ENCODE measurements at regions of chr9 and their contacts with region 1.

Region 1: GRCh38 chr9:100426530-100427428 is at the start of gene MSANTD3:
- DNase-seq: peak; percentile 76
- ATAC-seq: peak; percentile 64
- H3K4me3 ChIP-seq: peak within 1 kb of the TSS; percentile 66
- H3K27ac ChIP-seq: peak within 1 kb of the TSS; percentile 95
- H3K4me1 ChIP-seq: peaks cover 17% of the 10 kb centered on the region
- H3K27me3 ChIP-seq: no peaks in the 10 kb centered on the region
- CTCF ChIP-seq: peak; percentile 31
- POLR2A ChIP-seq: peak; percentile 90
- RAD21 ChIP-seq: no peak; the same call in 1 of the 2 replicates
- total RNA-seq, gene MSANTD3: 55.9 and 71.1 TPM in 2 replicates

Region 2: GRCh38 chr9:100346836-100347235 is 79.9 kb before region 1 on chr9:
- CTCF ChIA-PET with region 1: no interaction called
- POLR2A ChIA-PET with region 1: no interaction called
- dilution Hi-C with region 1: no loop called
- in situ Hi-C with region 1: loop called (anchors 5 kb)
- intact Hi-C with region 1: loop called (anchors 1 kb)
- DNase-seq: peak; percentile 53
- ATAC-seq: peak; percentile 77
- H3K4me3 ChIP-seq: no peak overlapping the region
- H3K27ac ChIP-seq: peak overlapping the region; percentile 1; the same call in 1 of the 2 replicates
- H3K4me1 ChIP-seq: peaks cover 2% of the 10 kb centered on the region; the same call in 1 of the 2 replicates
- H3K27me3 ChIP-seq: no peaks in the 10 kb centered on the region
- CTCF ChIP-seq: no peak
- POLR2A ChIP-seq: no peak
- RAD21 ChIP-seq: no peak

Region 3: GRCh38 chr9:100352727-100353505 is 73.9 kb before region 1 on chr9 and contains the start of gene TEX10:
- CTCF ChIA-PET with region 1: interaction called, 3 read pairs
- POLR2A ChIA-PET with region 1: interaction called, 6 read pairs
- dilution Hi-C with region 1: no loop called
- in situ Hi-C with region 1: loop called (anchors 5 kb)
- intact Hi-C with region 1: loop called (anchors 1 kb)
- DNase-seq: peak; percentile 81
- ATAC-seq: peak; percentile 95
- H3K4me3 ChIP-seq: peak within 1 kb of the TSS; percentile 96
- H3K27ac ChIP-seq: peak within 1 kb of the TSS; percentile 87
- H3K4me1 ChIP-seq: no peaks in the 10 kb centered on the region; the same call in 1 of the 2 replicates
- H3K27me3 ChIP-seq: no peaks in the 10 kb centered on the region
- CTCF ChIP-seq: no peak
- POLR2A ChIP-seq: peak; percentile 87
- RAD21 ChIP-seq: no peak
- total RNA-seq, gene TEX10: 43.9 and 53.3 TPM in 2 replicates